Posterior vena cava (tissue), 2 donors: ENCODE measurements at regions of chr16 and their contacts with region 1.

Region 1: GRCh38 chr16:64012166-64012565 is 1109.7 kb downstream of the CDH11 start:
- DNase-seq: no peak

Region 2: DNA sequence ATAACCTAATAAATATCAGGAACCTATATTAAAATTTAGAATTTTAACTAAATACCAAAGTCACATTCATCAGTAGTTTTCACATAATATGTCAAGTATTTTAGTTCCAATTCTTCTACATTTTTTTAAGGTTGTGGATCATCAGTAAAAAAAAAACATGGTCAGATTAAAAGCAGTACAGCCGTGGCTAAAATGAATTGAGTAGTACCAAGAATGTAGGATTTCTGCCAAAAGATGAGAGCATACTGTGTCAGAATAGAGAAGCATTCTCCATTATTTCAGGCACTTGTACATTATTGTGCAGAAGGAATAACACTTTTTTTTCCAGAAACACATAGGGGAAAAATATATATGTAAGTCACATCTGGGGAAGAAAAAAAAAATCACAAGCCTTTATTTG is 66.4 kb before region 1 on chr16:
- intact Hi-C with region 1: loop called in 1 of 2 experiments (anchors 10 kb)
- DNase-seq: no peak